ENCODE measurements at regions of chr18 and their contacts with region 1.

Region 1: DNA sequence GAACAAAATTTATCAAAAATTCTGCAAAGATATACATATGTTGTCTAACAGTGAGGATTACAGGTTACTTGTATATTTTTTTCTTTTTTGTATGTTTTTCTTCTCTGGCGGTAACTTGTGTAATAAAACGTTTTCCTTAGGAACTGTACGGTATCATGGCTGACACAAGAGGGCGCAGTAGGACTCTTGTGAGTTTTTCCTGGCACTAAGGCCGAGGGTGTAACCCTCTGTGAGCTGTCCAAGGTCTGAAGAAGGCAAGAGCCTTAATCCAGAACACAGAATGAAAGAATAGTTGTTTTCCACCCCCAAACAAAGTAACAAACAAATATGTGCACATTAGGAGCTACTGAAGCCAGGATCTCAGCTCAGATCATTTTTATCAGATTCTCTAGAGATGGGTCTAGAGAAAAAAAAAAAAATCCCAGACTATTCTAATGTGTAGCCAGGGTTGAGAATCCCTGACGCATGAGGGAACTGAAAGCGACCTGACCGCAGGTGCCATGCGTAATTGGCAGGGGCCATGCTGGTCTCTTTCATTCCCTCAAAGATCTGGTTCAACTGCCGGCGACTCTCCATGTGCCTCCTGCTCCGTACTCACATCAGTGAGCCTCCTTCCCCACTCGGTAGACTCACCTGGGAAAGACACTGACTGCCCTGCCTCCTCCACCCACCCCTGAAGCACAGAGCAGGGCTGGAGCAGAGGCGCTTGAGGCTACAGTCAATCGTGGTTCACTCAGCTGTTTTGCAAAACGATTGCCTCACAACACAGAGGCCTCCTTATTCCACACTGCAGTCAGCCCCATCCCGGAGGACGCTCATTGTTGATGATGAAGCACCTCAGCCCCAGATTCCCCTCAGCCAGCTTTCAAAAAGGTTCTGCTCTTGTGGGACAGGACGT is 26.9 kb downstream of the TMEM200C start:
- DNase-seq: no peak
- ATAC-seq: no peak
- H3K4me3 Mint-ChIP-seq: no peak overlapping the region
- H3K27ac Mint-ChIP-seq: no peak overlapping the region
- H3K4me1 Mint-ChIP-seq: peaks cover 4% of the 10 kb centered on the region
- H3K27me3 Mint-ChIP-seq: peaks cover 2% of the 10 kb centered on the region
- CTCF ChIP-seq: no peak

Region 2: GRCh38 chr18:6521795-6522418 is 653.4 kb after region 1 on chr18:
- CTCF ChIA-PET with region 1: no interaction called
- POLR2A ChIA-PET with region 1: no interaction called
- intact Hi-C with region 1: loop called (anchors 1 kb)
- DNase-seq: no peak
- ATAC-seq: no peak
- H3K4me3 Mint-ChIP-seq: no peak overlapping the region
- H3K27ac Mint-ChIP-seq: no peak overlapping the region
- H3K4me1 Mint-ChIP-seq: no peaks in the 10 kb centered on the region
- H3K27me3 Mint-ChIP-seq: peaks cover 3% of the 10 kb centered on the region
- CTCF ChIP-seq: no peak

Region 3: DNA sequence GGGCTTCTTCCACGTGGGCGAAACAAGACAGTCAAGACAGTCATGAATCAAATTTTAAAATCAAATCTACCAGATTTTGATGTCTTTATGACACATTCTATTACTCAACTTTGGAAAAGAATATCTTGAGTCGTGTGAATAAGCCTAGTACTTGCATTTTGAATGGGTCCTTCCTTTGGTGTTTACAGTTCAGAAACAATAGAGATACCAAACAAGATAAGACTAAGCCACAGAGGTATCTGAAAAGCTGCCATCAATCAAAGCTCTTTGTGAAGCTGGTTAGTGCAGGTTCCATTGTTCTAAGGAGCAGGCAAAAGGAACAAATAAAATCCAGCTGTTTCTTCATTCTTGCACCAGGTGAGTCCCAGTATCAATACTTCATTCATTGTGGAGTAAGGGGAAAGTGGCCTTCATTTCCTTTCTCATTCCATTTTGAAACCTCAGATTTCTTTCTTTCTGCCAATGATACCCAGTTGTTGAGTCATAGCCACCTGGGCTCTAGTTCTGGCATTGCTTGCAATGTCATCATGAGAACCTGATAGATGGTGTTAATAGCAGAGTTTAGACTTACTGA is 698.0 kb after region 1 on chr18:
- CTCF ChIA-PET with region 1: no interaction called
- POLR2A ChIA-PET with region 1: no interaction called
- intact Hi-C with region 1: no loop called
- DNase-seq: no peak
- ATAC-seq: no peak
- H3K4me3 Mint-ChIP-seq: no peak overlapping the region
- H3K27ac Mint-ChIP-seq: no peak overlapping the region
- H3K4me1 Mint-ChIP-seq: no peaks in the 10 kb centered on the region
- H3K27me3 Mint-ChIP-seq: no peaks in the 10 kb centered on the region
- CTCF ChIP-seq: no peak

Measured in activated B cell treated with CpG ODN at 0.5 μM for 24 hours (primary cell).